H1 (cell line): ENCODE measurements at regions of chr22 and their contacts with region 1.

Region 1: GRCh38 chr22:41543854-41544670 is at the start of gene POLR3H:
- DNase-seq: peak; percentile 91 to 98
- H3K4me3 ChIP-seq: peak within 1 kb of the TSS; percentile 51 to 90 (median 82)
- H3K27ac ChIP-seq: peak within 1 kb of the TSS; percentile 65; the same call in 1 of the 2 replicates
- H3K4me1 ChIP-seq: peaks cover 0 to 5% (median under 1%) of the 10 kb centered on the region in 4 experiments; a peak in 3 of 7 replicates
- H3K27me3 ChIP-seq: 0 out of 7 replicates have a peak, but pooled peaks cover 0 to 2% (median 0%) of the 10 kb centered on the region in 4 experiments
- CTCF ChIP-seq: peak; percentile 34 to 61 (median 45); a peak in 3 of 4 replicates
- EP300 ChIP-seq: no peak
- POLR2A ChIP-seq: peak in 1 of 2 experiments; percentile 58; a peak in 2 of 3 replicates
- RAD21 ChIP-seq: peak in 1 of 2 experiments; percentile 29; a peak in 2 of 4 replicates
- total RNA-seq, gene POLR3H: 34.5 and 39.2 TPM in 2 replicates

Region 2: DNA sequence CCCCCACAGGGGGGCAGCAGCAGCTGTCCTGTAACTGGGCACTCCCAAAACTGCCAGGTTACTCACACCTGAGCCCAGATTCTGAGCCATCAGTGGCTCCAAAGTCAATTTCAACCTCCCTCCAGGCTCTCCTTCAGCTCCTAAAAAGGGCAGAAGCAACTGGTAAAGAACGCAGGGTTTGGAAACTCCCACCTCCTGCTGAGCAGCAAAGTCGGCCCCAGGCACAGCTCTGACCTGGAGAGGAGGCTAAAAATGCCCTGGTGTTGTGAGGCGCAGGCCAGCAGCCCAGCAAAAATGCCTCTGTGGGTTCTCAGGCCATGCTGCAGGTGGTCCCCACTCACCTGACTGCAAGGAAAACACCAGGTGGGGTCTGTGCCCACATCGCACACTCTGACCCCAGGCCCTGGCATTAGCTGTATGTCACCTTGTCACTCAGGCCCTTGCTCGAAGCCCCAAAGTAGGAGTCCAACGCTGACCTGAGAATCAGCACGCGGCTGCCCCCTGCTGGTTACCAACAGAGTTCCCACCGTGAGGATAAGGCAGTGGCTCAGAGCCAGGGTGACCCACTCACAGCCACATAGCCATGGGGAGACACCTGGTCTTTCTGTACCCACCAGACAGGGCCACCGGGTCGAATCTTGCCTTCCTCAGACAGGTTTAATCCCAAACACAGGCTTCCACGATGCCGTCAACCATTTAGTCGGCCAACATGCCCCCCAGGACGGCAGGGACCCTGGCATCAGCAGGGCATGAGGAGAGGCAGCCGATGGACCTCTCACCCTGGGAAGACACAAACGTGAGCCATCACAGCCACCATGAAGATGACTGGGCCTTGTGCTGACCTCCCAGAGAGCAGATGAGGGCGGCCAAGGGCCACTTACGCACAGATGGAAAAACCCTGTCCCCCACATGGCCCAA is 10.9 kb before region 1 on chr22:
- CTCF ChIA-PET with region 1: interaction called, 21 read pairs
- POLR2A ChIA-PET with region 1: interaction called, 15 read pairs
- DNase-seq: peak in 1 of 2 experiments; percentile 91
- H3K4me3 ChIP-seq: no peak overlapping the region
- H3K27ac ChIP-seq: peak overlapping the region; percentile 48; the same call in 1 of the 2 replicates
- H3K4me1 ChIP-seq: peaks cover 0 to 7% (median 5%) of the 10 kb centered on the region in 4 experiments; a peak in 4 of 7 replicates
- H3K27me3 ChIP-seq: no peaks in the 10 kb centered on the region
- CTCF ChIP-seq: peak; percentile 83 to 91 (median 91)
- EP300 ChIP-seq: no peak
- POLR2A ChIP-seq: peak in 1 of 2 experiments; percentile 50; a peak in 1 of 3 replicates
- RAD21 ChIP-seq: peak; percentile 45 to 67